PC-3 (cell line): ENCODE measurements at regions of chr9 and their contacts with region 1.

Region 1: GRCh38 chr9:35553670-35554543 is 51.2 kb upstream of the TESK1 start:
- DNase-seq: peak; percentile 79
- ATAC-seq: peak; percentile 84
- H3K4me3 ChIP-seq: no peak overlapping the region
- H3K27ac ChIP-seq: no peak overlapping the region
- H3K4me1 ChIP-seq: peaks cover 17% of the 10 kb centered on the region
- H3K27me3 ChIP-seq: no peaks in the 10 kb centered on the region
- CTCF ChIP-seq: peak; percentile 88

Region 2: DNA sequence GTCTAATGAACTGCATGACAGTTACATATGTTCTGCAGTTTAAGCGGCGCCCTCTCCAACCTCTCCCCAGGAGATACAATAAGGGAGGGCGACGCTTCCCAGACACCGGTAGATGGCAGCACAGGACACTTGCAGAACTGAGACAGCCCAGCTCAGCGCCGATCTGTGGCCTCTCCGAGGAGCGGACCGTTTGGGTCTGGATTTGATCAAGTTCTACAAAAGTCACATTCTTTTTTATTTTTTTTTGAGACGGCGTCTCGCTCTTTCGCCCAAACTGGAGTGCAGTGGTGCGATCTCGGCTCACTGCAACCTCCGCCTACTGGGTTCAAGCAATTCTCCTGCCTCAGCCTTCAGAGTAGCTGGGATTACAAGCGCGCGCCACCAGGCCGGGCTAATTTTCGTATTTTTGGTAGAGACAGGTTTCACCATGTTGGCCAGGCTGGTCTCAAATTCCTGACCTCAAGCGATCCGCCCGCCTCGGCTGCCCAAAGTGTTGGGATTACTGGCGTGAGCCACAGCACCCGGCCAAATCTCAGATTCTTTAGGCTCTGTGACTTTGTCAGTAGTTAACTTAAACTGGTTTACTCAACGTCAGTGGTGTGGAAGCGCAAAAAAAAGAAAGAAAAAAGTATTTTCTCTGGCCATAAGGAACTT is 436.9 kb before region 1 on chr9:
- CTCF ChIA-PET with region 1: no interaction called
- POLR2A ChIA-PET with region 1: no interaction called
- intact Hi-C with region 1: loop called (anchors 5 kb)
- DNase-seq: peak; percentile 89
- ATAC-seq: peak; percentile 53
- H3K4me3 ChIP-seq: peak overlapping the region; percentile 83
- H3K27ac ChIP-seq: peak overlapping the region; percentile 36
- H3K4me1 ChIP-seq: peaks cover 32% of the 10 kb centered on the region
- H3K27me3 ChIP-seq: no peaks in the 10 kb centered on the region
- CTCF ChIP-seq: peak; percentile 87

Region 3: GRCh38 chr9:35481347-35481975 is 72.4 kb before region 1 on chr9:
- CTCF ChIA-PET with region 1: interaction called, 3 read pairs
- POLR2A ChIA-PET with region 1: no interaction called
- intact Hi-C with region 1: loop called (anchors 1 kb)
- DNase-seq: peak; percentile 74
- ATAC-seq: peak; percentile 54; the same call in 1 of the 2 replicates
- H3K4me3 ChIP-seq: no peak overlapping the region
- H3K27ac ChIP-seq: no peak overlapping the region
- H3K4me1 ChIP-seq: peaks cover 6% of the 10 kb centered on the region; the same call in 1 of the 2 replicates
- H3K27me3 ChIP-seq: no peaks in the 10 kb centered on the region
- CTCF ChIP-seq: peak; percentile 74

Region 4: DNA sequence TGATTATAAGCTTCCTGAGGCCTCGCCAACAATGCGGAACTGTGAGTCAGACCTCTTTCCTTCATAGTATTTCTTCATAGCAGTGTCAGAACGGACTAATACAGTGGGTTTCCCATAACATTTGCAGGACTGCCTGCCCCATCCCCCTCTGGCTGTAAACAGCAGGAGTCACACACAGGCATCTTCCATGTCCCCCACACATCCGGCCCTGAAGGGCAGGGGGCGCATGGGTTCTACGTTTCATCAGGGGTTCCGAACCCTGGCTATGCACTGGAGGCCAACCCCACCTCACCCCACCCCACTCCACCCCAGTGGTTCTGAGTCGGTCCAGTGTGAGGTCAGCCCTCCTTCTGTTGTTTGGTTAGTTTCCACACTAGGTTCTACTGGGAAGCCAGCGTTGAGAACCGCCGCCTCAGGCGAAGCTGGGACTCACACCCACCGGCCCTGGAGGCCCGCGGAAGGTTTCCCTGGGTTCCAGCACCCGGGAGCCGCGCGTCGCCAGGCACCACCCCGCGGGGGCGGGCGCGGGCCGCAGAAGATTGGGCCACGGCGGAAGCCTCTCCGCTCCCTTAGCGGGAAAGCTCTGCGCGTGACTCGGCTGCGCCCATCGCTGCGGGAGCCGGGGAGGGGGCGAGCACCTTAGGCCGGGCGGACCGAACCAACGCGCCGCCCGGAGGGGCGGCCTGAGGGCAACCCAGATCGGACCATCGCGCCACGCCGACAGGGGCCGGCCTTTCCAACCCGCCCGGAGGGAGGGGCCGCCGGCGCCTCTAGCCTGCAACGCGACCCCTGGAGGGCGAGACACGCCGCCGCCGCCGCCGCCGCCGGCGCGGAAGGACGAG is 64.4 kb before region 1 on chr9 and contains the start of gene RUSC2:
- CTCF ChIA-PET with region 1: interaction called, 6 read pairs
- POLR2A ChIA-PET with region 1: no interaction called
- intact Hi-C with region 1: loop called (anchors 1 kb)
- DNase-seq: peak; percentile 73
- ATAC-seq: peak; percentile 67
- H3K4me3 ChIP-seq: peak within 1 kb of the TSS; percentile 70
- H3K27ac ChIP-seq: peak within 1 kb of the TSS; percentile 74
- H3K4me1 ChIP-seq: peaks cover 31% of the 10 kb centered on the region
- H3K27me3 ChIP-seq: no peaks in the 10 kb centered on the region
- CTCF ChIP-seq: 0 out of 2 replicates have a peak, but pooled peaks have one; percentile 22
- total RNA-seq, gene RUSC2: 10.7 and 13.3 TPM in 2 replicates

Region 5: GRCh38 chr9:35510745-35511428 is 43.0 kb before region 1 on chr9:
- CTCF ChIA-PET with region 1: interaction called, 12 read pairs
- POLR2A ChIA-PET with region 1: interaction called, 3 read pairs
- intact Hi-C with region 1: loop called (anchors 1 kb)
- DNase-seq: peak; percentile 90
- ATAC-seq: peak; percentile 96
- H3K4me3 ChIP-seq: no peak overlapping the region
- H3K27ac ChIP-seq: peak overlapping the region; percentile 66
- H3K4me1 ChIP-seq: peaks cover 46% of the 10 kb centered on the region
- H3K27me3 ChIP-seq: no peaks in the 10 kb centered on the region
- CTCF ChIP-seq: peak; percentile 45